Astrocyte of the cerebellum (primary cell): ENCODE measurements at regions of chr5 and their contacts with region 1.

Region 1: GRCh38 chr5:178688551-178688950 is 41.9 kb downstream of the ZNF354A start:
- DNase-seq: no peak
- H3K4me3 ChIP-seq: no peak overlapping the region
- CTCF ChIP-seq: no peak

Region 2: DNA sequence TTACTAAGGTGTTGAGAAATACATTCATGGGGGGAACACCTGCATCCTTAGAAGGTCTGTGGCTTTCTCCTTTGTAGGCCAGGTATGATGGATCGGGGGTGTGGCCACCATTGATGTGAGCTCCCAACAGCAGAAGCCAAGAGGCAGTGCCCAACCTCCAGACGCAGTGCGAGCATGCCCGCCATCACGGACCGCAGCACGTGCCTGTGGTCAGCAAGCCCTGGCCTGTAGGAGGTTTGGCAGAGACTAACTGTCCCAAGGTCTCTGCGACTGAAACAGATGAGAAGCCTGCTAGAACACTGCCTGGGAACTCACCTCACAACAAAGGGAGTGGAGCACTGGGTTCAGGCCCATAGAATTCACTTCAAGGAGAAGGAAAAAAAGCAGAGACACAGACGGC is 73.8 kb after region 1 on chr5:
- in situ Hi-C with region 1: loop called (anchors 5 kb)
- DNase-seq: no peak
- H3K4me3 ChIP-seq: no peak overlapping the region
- CTCF ChIP-seq: no peak